ENCODE measurements at regions of chr1 and their contacts with region 1.

Region 1: DNA sequence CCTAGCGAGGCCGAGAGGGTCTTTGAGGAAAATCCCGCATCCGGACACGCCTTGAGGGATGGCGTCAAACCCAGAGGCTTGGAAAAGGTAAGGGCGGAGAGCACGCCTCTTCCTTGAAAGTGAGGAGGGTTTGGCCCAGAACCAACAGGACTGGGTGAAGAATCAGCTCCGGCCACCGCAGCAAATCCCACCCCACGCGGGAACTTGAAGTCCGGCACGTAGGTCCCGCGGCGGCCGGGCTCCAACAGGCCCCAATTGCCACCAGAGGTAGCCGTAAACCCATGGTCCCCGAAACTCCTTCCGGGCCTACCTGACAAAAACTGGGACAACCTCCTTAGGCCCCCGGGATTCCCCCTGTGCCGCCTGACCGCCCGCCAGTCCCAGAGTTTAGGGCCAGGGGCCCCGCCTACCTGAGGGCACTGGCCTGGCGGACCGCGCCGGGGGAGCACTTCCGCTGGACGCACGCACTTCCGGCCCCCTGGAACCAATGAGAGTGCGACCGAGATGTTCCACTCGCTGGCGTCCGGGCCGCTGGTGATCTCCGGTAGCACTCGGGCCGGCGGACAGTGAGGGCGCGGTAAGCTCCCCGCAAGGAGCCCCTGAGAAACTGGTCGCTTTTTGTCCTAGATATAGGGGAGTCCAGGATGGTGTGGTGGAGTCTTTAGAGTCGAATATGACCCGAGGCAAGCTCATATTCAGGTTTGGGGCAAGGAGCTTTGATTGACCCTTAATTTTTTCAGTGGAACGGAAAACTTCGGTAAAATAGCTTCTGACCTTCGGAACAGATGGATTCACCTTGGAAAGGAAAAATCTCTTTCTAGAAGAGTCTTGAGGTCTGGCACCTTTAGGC is at the starts of genes LZIC and NMNAT1:
- DNase-seq: peak; percentile 93
- ATAC-seq: peak; percentile 95
- H3K4me3 Mint-ChIP-seq: peak within 1 kb of the TSS; percentile 98
- H3K27ac Mint-ChIP-seq: peak within 1 kb of the TSS; percentile 99
- H3K4me1 Mint-ChIP-seq: peaks cover 2% of the 10 kb centered on the region
- H3K27me3 Mint-ChIP-seq: no peaks in the 10 kb centered on the region
- CTCF ChIP-seq: no peak
- total RNA-seq, gene LZIC: 16.9 to 22.0 TPM (median 20.9 TPM) in 3 replicates
- total RNA-seq, gene NMNAT1: 2.3 to 2.8 TPM (median 2.8 TPM) in 3 replicates

Region 2: GRCh38 chr1:9890224-9890731 is 52.9 kb before region 1 on chr1:
- CTCF ChIA-PET with region 1: interaction called, 10 read pairs
- POLR2A ChIA-PET with region 1: no interaction called
- DNase-seq: no peak
- ATAC-seq: peak; percentile 77
- H3K4me3 Mint-ChIP-seq: no peak overlapping the region
- H3K27ac Mint-ChIP-seq: peak overlapping the region; percentile 89
- H3K4me1 Mint-ChIP-seq: peaks cover 46% of the 10 kb centered on the region
- H3K27me3 Mint-ChIP-seq: no peaks in the 10 kb centered on the region
- CTCF ChIP-seq: no peak

Region 3: GRCh38 chr1:9929431-9930385 is 13.5 kb before region 1 on chr1:
- CTCF ChIA-PET with region 1: interaction called, 11 read pairs
- POLR2A ChIA-PET with region 1: no interaction called
- DNase-seq: peak; percentile 41
- ATAC-seq: peak; percentile 93
- H3K4me3 Mint-ChIP-seq: peak overlapping the region; percentile 29; the same call in 1 of the 2 replicates
- H3K27ac Mint-ChIP-seq: peak overlapping the region; percentile 97
- H3K4me1 Mint-ChIP-seq: peaks cover 42% of the 10 kb centered on the region
- H3K27me3 Mint-ChIP-seq: no peaks in the 10 kb centered on the region
- CTCF ChIP-seq: no peak

Region 4: DNA sequence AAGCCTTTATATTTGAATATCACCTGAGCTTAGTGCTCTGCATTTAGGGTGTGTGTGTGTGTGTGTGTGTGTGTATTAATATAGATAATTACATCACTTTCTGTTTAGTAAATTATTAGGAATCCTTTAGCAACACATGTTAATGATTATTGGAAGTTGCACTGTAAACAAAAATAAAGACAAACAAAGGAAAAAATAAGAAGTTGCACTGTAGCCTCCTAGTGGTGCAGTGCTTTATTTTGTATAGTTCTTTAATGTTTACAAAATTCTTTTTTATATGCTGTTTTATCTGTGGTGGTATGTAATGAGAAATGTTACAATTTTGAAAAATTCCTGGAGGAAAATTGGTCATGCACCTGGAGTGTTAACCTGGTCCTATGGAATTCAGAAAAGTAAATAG is 158.8 kb after region 1 on chr1:
- CTCF ChIA-PET with region 1: no interaction called
- POLR2A ChIA-PET with region 1: no interaction called
- DNase-seq: no peak
- ATAC-seq: no peak
- H3K4me3 Mint-ChIP-seq: no peak overlapping the region
- H3K27ac Mint-ChIP-seq: no peak overlapping the region
- H3K4me1 Mint-ChIP-seq: no peaks in the 10 kb centered on the region
- H3K27me3 Mint-ChIP-seq: no peaks in the 10 kb centered on the region
- CTCF ChIP-seq: no peak

Measured in WTC11 (cell line).